Ascending aorta (tissue), 2 donors: ENCODE measurements at regions of chr4 and their contacts with region 1.

Region 1: DNA sequence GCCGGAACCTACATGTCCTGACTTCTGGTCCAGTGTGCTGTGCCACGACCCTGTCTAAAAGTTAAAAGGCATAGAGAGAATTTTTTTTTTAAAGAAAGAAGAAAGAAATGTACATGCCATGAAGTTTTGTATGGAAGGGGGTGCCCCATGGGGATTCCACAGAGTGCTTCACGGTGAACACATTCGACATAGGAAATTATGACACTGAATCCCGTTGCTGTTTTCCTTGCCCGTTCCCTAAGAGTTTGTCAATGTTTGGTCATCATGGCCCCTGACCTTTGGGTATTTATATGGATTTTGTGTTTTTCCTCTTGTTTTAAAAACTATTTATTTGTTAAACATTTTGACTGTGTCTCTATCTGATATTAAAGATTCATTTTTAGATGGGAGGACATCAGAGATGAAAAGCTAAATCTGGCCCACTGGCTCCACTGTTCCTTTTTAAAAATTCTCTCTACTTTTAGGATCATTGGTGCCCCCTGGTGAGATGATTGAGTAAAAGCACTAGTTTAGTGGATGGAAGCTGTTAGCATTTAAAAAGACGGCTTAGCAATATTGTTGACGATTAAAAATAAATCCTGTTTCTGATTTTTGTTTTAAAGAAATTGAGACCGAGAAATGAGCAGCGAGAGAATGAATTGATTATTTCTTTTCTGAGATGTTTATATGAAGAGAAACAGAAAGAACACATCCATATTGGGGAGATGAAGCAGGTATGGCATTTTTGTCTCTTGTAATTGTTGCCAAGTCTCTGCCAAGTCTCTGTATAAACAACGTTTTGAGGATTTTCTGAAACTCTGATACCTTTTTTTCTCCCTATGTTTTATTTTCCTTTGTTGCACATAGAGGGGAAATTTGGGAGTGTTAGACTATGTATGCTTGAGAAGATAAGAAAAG is 75.0 kb downstream of the PTTG2 start:
- DNase-seq: no peak
- H3K4me3 ChIP-seq: no peak overlapping the region
- H3K27ac ChIP-seq: peak overlapping the region; percentile 1 to 40
- H3K4me1 ChIP-seq: no peaks in the 10 kb centered on the region
- H3K27me3 ChIP-seq: no peaks in the 10 kb centered on the region
- CTCF ChIP-seq: peak; percentile 60 to 78 (median 72)

Region 2: DNA sequence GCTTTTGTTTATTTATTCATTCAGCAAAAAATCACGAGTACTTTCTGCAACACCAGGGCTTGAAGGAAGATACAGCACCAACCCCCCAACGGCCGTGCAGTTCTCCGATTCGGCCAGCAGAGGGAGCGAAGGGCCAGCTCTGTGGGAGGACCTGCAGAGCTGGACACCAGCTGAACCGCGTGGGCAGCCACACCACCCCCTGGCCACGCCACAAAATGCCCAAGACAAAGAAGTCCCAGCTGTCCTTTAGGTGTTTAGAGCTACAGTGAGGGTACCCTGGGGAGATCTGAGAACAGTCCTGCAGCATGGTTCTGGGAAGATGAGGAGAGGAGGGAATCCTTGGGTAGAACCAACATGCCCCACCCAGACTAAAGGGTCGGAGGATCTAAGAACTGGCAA is 432.2 kb before region 1 on chr4:
- intact Hi-C with region 1: loop called (anchors 5 kb)
- DNase-seq: peak; percentile 34 to 87
- H3K4me3 ChIP-seq: no peak overlapping the region
- H3K27ac ChIP-seq: no peak overlapping the region
- H3K4me1 ChIP-seq: no peaks in the 10 kb centered on the region
- H3K27me3 ChIP-seq: no peaks in the 10 kb centered on the region
- CTCF ChIP-seq: peak; percentile 91 to 99 (median 96)

Region 3: DNA sequence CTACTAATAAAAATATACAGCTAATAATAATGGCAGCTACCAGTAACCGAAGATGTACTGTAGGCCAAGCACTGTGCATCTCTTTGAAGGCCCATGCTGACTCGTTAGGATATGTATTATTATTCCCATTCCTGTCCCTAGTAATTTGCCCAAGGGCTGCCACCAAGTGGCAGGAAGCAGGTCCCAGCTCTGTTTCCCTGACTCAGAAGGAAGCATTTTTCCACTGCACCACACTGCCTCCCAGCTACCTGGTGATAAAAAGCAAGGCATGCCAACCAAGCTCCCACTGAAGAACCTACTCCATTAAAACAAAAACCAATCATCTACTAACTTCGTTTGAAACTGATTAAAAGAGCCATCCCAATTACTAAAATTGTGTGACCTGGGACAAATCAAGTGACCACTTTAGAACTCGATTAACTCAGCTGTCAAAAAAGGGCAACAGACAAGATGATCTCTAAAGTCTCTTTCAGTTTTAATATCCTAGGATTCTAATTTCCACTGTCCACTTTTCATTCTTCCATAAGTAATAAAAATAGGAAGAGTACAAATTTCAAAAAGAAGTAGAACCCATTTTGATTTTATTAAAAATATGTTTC is 233.1 kb before region 1 on chr4:
- intact Hi-C with region 1: loop called (anchors 2 kb)
- DNase-seq: no peak
- H3K4me3 ChIP-seq: no peak overlapping the region
- H3K27ac ChIP-seq: no peak overlapping the region
- H3K4me1 ChIP-seq: no peaks in the 10 kb centered on the region
- H3K27me3 ChIP-seq: no peaks in the 10 kb centered on the region
- CTCF ChIP-seq: peak; percentile 23 to 70 (median 45)

Region 4: DNA sequence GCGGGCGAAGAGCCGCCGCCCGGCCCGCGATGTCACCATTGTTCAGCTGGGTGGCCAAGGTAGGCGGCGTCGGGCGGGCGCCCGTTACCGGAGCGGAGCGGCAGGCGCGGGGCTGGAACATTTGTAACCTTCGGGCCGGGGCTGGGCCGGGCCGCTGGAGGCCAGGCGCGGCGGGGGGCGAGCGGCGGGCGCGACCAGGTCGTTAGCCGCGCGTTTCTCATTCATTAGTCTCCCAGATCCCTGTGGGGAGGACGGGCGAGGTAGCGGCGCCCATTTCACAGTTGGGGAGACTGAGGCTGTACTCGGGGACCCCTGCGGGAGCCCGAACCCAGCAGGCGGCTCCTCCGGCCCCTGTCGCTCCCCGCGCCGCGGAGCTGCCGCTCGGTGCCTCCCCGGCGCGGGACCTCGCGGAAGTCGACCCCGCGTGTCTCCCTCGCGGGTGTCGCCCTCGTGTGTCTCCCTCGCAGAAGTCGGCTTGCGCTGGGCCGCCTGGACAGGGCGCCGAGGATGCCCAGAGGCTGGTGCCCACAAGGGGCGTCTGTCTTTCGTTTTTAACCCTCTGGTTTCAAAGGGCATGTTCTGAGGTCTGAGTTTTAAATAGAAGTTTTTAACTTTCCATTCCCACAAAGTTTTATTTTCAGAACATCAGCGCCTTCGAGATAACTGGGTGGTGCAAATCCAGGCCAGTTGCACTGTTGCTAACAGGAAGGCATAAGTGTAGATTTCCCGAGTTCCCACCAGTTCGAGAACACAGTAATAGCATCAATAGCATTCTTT is 57.6 kb before region 1 on chr4:
- intact Hi-C with region 1: loop called (anchors 2 kb)
- DNase-seq: peak; percentile 44 to 90
- H3K4me3 ChIP-seq: peak overlapping the region; percentile 76 to 99
- H3K27ac ChIP-seq: peak overlapping the region; percentile 97 to 99
- H3K4me1 ChIP-seq: peaks cover 4 to 26% of the 10 kb centered on the region in 2 donors
- H3K27me3 ChIP-seq: no peaks in the 10 kb centered on the region
- CTCF ChIP-seq: peak; percentile 76 to 86 (median 78)